ENCODE measurements at regions of chr6 and their contacts with region 1.

Region 1: GRCh38 chr6:273551-274058 is 18.7 kb upstream of the DUSP22 start:
- DNase-seq: no peak
- ATAC-seq: no peak
- H3K4me3 ChIP-seq: no peak overlapping the region
- H3K4me3 Mint-ChIP-seq: no peak overlapping the region
- H3K27ac ChIP-seq: no peak overlapping the region
- H3K27ac Mint-ChIP-seq: no peak overlapping the region
- H3K4me1 ChIP-seq: peaks cover 0 to 4% of the 10 kb centered on the region in 2 donors
- H3K4me1 Mint-ChIP-seq: peaks cover 8 to 41% (median 35%) of the 10 kb centered on the region in 7 donors
- H3K27me3 ChIP-seq: no peaks in the 10 kb centered on the region
- H3K27me3 Mint-ChIP-seq: peaks cover 0 to 11% (median 0%) of the 10 kb centered on the region in 5 donors

Region 2: DNA sequence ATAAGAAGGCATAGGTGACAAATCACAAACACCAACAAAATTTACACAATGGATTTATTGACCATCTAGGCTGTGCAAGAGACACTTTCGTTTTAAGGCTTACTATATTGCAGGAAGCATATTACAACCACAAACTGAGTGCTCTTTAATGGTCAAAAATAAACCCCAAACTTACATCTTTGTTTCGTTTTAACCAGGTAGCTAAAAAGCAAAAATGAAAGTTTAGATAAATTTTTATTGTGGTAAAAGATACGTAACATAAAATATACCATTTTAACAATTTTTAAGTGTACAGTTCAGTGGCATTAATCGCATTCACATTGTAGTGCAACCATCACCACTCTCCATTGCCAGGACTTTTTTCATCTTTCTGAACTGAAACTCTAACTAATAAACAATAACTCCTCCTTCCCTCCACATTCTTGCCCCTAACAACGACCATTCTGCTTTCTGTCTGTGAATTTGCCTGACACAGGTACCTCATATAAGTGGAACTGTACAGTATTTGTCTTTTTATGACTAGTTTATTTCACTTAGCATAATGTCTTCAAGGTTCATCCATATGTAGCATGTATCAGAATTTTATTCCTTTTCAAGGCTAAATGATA is 13.6 kb before region 1 on chr6:
- CTCF ChIA-PET with region 1: no interaction called
- POLR2A ChIA-PET with region 1: no interaction called
- intact Hi-C with region 1: loop called in 1 of 2 experiments (anchors 1 kb)
- DNase-seq: no peak
- ATAC-seq: peak; percentile 39
- H3K4me3 ChIP-seq: peak overlapping the region; percentile 24
- H3K4me3 Mint-ChIP-seq: peak overlapping the region in 8 of 10 donors; percentile 1 to 66 (median 41)
- H3K27ac ChIP-seq: no peak overlapping the region
- H3K27ac Mint-ChIP-seq: peak overlapping the region in 6 of 9 donors; percentile 0 to 79 (median 25)
- H3K4me1 ChIP-seq: peaks cover 6 to 16% of the 10 kb centered on the region in 2 donors
- H3K4me1 Mint-ChIP-seq: peaks cover 0 to 58% (median 36%) of the 10 kb centered on the region in 7 donors
- H3K27me3 ChIP-seq: no peaks in the 10 kb centered on the region
- H3K27me3 Mint-ChIP-seq: no peaks in the 10 kb centered on the region

Region 3: DNA sequence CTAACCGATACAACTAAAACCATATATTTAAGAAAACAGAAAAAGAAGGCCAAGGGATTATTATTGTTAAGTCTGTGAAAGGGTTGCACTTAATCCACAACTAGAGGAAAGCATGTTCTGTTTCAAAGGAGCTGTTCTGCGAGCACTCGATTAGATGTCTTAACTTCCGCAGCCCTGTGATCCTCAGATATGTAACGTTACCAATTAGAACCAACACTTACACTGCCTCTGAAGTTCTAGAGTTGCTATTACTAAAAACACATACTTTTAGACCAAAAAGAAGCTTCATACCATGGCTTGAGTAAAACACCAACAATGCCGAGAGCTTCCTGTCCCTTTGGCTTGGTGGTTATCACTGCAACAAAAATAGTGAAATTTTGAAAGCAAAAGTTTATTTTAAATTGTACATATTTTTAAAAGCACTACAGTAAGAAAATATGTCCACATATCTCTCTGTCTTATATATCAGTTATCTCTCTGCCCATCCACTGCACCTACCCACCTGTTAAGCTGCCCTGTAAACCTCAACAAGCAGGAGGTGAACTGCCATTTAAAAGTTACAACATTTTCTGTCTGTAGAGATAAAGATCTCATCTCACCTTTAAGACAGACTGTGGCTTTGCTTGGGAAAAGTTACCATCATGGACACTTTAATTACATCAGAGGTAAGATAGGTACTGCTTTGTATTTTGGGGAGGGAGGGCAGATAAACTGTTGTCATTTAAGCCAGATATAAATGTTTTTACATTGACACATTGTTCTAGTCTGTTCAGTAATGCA is 11.6 kb after region 1 on chr6:
- CTCF ChIA-PET with region 1: no interaction called
- POLR2A ChIA-PET with region 1: interaction called, 7 read pairs
- intact Hi-C with region 1: loop called in 1 of 2 experiments (anchors 2 kb)
- DNase-seq: peak in 1 of 9 donors; percentile 16
- ATAC-seq: no peak
- H3K4me3 ChIP-seq: no peak overlapping the region
- H3K4me3 Mint-ChIP-seq: peak overlapping the region in 7 of 10 donors; percentile 15 to 49 (median 30)
- H3K27ac ChIP-seq: no peak overlapping the region
- H3K27ac Mint-ChIP-seq: peak overlapping the region in 7 of 9 donors; percentile 2 to 81 (median 27)
- H3K4me1 ChIP-seq: no peaks in the 10 kb centered on the region
- H3K4me1 Mint-ChIP-seq: peaks cover 1 to 50% (median 41%) of the 10 kb centered on the region in 7 donors
- H3K27me3 ChIP-seq: no peaks in the 10 kb centered on the region
- H3K27me3 Mint-ChIP-seq: peaks cover 0 to 4% (median 0%) of the 10 kb centered on the region in 5 donors

Region 4: DNA sequence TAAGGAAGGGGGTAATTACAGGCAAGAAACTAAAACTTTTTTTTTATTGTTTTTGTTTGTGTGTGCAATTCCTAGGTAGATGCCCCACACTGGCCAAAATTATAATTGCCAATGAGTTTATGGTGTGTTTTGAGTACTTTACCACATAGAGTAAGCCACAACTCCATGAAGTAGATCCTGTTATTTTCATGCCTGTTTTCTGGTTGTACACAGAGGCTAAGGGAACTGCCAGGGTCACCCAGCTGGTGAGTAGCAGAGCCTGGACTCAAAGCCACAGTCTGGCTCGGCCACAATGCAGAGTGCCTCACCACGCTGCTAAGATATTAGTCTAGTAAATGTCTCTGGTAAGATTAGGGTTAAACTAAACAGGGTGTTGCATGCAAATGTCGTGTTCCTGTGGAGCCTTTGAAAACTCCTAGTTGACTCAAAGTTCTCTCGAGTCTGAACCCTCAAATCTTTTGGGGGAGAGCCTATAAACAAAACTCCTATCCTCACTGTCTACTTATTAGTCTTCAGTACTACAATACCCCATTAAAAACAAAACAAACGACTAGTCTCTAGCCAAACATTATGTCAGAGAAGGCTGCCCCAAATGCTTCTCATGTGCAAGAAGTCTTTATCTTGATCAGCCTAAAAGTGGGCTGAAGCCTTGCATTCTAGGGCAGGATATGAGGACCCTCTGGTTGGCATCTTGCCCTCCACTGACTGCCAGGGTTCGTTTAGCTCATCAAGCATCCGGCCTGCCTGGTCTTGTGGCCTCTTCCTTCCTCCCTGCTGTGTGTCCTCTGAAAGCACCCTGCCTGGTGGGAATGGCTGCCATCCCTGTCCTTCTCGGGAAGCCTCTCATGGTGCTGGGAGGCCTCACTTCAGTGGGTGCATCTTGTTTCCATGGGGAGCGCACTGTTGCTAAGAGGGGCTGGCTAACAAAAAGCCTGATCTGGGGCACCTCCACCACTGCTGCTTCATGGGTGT is 22.8 kb after region 1 on chr6:
- CTCF ChIA-PET with region 1: no interaction called
- POLR2A ChIA-PET with region 1: no interaction called
- intact Hi-C with region 1: no loop called
- DNase-seq: peak in 1 of 9 donors; percentile 16
- ATAC-seq: no peak
- H3K4me3 ChIP-seq: no peak overlapping the region
- H3K4me3 Mint-ChIP-seq: peak overlapping the region in 8 of 10 donors; percentile 13 to 66 (median 25)
- H3K27ac ChIP-seq: no peak overlapping the region
- H3K27ac Mint-ChIP-seq: peak overlapping the region in 6 of 9 donors; percentile 5 to 60 (median 28)
- H3K4me1 ChIP-seq: peaks cover 8 to 20% of the 10 kb centered on the region in 2 donors
- H3K4me1 Mint-ChIP-seq: peaks cover 12 to 48% (median 27%) of the 10 kb centered on the region in 7 donors
- H3K27me3 ChIP-seq: no peaks in the 10 kb centered on the region
- H3K27me3 Mint-ChIP-seq: no peaks in the 10 kb centered on the region

Region 5: DNA sequence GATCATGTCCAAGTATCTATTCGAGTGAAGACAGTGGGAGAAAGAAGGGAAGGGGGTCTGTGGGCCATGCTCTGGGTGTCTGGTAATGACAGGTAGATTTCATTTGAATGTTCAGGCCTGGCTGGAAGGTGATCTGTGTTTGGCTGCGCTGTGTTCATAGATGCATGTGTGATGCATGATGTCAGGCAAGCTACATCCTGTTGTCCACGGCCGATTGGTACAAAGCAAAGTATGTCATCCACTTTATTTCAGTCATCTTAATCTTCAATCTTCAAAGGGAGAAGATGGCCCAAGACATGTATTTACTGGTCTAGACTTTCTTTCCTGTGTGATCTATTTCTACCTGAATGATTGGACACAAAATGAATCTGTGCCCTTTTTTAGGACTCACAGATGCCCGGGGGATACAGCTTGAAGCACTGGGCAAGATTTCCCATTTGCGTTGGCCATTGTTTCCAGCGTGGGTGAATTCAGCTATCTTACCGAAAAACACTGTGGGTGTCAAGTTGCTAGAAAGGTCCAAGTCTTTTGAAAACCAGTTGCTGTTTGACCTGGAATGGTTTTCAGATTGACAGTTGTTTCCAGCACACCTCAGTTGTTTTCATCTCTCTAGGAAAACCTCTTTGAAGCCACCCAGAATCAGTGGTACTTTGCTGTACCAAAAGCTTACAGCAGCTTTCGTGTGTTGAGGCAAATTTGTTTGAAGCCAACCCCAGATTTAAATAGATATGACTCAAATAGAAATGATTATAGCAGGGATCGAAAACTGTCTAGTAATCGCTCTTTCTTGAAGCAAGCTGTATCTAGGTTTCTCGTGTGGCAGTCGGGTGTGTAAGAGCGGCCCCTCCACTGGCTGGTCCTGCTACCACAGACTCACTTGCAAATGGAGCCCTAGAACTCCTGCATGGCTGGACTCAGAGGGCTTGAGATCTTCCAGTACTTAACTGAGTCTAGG is 45.8 kb after region 1 on chr6:
- CTCF ChIA-PET with region 1: no interaction called
- POLR2A ChIA-PET with region 1: no interaction called
- intact Hi-C with region 1: no loop called
- DNase-seq: no peak
- ATAC-seq: no peak
- H3K4me3 ChIP-seq: no peak overlapping the region
- H3K4me3 Mint-ChIP-seq: no peak overlapping the region
- H3K27ac ChIP-seq: no peak overlapping the region
- H3K27ac Mint-ChIP-seq: peak overlapping the region in 2 of 9 donors; percentile 19 to 33
- H3K4me1 ChIP-seq: no peaks in the 10 kb centered on the region
- H3K4me1 Mint-ChIP-seq: peaks cover 5 to 33% (median 12%) of the 10 kb centered on the region in 7 donors
- H3K27me3 ChIP-seq: no peaks in the 10 kb centered on the region
- H3K27me3 Mint-ChIP-seq: no peaks in the 10 kb centered on the region